Right ventricle myocardium superior (tissue), 1 donor: ENCODE measurements at regions of chr4 and their contacts with region 1.

Region 1: GRCh38 chr4:1726146-1726934 is 5.0 kb downstream of the TACC3 start:
- DNase-seq: peak; percentile 95
- ATAC-seq: peak; percentile 66

Region 2: GRCh38 chr4:1608821-1609500 is 117.4 kb before region 1 on chr4:
- intact Hi-C with region 1: no loop called
- DNase-seq: peak; percentile 31
- ATAC-seq: no peak

Region 3: GRCh38 chr4:1693129-1693896 is 33.0 kb before region 1 on chr4:
- intact Hi-C with region 1: loop called (anchors 2 kb)
- DNase-seq: peak; percentile 78
- ATAC-seq: peak; percentile 86

Region 4: DNA sequence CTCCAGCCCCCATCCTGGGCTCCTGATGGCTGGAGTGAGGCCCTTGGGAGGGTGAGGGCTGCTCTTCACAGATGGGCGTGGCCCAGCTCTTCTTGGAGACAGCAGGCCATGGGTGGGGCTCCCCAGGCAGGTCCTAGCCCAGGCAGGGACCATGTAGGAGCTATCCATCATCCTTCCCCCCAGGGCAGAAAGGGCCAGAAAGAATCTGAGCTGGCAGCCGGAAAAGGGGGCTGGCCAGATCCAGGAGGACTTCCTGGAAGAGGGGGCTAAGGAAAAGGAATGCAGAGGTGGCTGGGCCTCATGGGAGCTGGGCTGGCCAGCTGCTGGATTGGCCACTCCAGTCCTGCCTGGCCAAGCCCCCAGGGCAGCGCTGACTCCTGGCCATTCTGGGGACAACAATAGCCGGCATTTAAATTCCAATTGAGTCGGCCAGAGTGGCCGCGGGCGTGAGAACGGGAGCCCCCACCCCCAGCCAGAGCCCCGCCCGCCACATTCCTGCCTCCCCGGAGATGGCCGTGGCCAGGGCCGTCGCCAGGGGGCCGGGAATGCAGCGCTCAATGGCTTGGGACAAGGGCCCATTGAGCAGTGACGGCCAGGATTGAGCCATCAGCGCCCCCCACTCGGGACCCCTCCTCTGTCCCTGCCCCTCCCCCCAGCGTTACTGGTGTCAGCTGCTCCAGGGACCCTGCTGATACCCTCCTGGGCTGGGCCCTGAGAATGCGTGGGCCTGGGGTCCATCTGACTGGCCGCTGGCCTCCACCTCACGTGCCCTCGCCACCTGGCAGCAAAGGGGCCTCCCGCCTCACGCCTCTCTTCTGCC is 51.7 kb after region 1 on chr4:
- intact Hi-C with region 1: no loop called
- DNase-seq: no peak
- ATAC-seq: no peak

Region 5: DNA sequence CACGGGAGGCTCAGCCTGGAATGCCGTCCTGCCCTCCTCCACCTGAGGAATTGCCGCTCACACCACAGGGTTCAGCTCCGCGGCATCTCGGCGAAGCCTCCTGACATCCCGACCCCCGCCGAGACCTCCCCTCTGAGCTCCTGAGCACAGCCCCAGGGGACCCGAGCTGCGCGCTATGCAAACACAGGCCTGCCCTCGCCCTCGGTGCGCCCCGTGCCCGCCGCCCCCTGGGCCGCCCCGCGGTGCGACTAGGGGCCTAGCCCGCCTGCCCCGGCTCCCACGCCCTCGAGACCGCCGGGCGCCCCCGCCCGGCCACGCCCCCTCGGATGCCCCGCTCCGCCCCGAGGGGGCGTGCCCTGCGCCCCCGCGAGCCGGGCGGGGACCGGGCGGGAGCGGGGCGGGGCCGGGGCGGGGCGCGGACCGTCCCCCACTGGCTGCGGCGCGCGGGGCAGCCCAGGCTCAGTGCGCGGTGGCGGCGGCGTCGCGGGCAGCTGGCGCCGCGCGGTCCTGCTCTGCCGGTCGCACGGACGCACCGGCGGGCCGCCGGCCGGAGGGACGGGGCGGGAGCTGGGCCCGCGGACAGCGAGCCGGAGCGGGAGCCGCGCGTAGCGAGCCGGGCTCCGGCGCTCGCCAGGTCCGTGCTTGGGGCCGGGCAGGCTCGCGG is 66.6 kb after region 1 on chr4 and contains the start of gene FGFR3:
- intact Hi-C with region 1: no loop called
- DNase-seq: peak; percentile 56
- ATAC-seq: peak; percentile 78
- total RNA-seq, gene FGFR3: 2.9 TPM

Region 6: GRCh38 chr4:1826531-1827350 is 100.4 kb after region 1 on chr4:
- intact Hi-C with region 1: no loop called
- DNase-seq: no peak
- ATAC-seq: no peak